ENCODE measurements at regions of chr2 and their contacts with region 1.

Region 1: GRCh38 chr2:207746131-207746530 is 23.6 kb downstream of the FZD5 start:
- DNase-seq: peak in 3 of 5 donors; percentile 26 to 57 (median 28)
- H3K4me3 ChIP-seq: no peak overlapping the region
- H3K4me3 Mint-ChIP-seq: no peak overlapping the region
- H3K27ac ChIP-seq: no peak overlapping the region
- H3K27ac Mint-ChIP-seq: no peak overlapping the region
- H3K4me1 ChIP-seq: no peaks in the 10 kb centered on the region
- H3K4me1 Mint-ChIP-seq: no peaks in the 10 kb centered on the region
- H3K27me3 ChIP-seq: no peaks in the 10 kb centered on the region
- H3K27me3 Mint-ChIP-seq: no peaks in the 10 kb centered on the region

Region 2: DNA sequence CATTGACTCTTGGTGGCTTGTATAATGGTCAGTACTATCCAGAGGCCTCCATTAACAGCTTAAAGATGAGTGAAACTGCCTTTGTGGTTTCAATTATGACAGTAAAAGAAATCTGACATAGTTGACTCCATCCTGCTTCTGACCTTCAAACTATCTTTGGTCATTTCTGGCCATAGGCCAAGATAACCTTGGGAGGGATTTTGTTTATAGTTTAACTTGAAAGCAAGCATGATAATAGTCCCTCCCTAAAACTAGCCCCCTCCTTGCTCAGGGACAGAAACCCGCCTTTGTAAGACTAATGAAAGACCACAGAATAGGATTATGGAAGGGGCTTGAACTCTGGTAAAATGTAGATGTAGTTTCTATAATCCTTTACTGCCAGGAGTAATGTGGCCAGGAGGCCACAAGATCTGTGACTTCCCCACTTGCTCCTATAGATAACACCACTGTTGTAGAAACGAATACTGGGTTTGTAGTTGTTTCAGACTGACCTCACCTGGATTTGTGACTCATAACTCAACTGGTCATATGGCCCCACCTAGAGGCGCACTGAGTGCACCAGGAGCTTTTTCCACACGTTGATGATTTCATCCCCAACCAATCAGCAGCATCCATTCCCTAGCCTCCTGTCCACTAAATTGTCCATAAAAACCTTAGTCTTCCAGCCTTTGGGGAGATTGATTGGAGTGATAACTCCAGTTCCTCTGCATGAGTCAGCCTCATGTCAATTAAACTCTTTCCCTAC is 287.8 kb after region 1 on chr2:
- CTCF ChIA-PET with region 1: interaction called, 10 read pairs
- POLR2A ChIA-PET with region 1: no interaction called
- DNase-seq: peak in 3 of 5 donors; percentile 8 to 64 (median 27)
- H3K4me3 ChIP-seq: no peak overlapping the region
- H3K4me3 Mint-ChIP-seq: no peak overlapping the region
- H3K27ac ChIP-seq: no peak overlapping the region
- H3K27ac Mint-ChIP-seq: no peak overlapping the region
- H3K4me1 ChIP-seq: no peaks in the 10 kb centered on the region
- H3K4me1 Mint-ChIP-seq: no peaks in the 10 kb centered on the region
- H3K27me3 ChIP-seq: no peaks in the 10 kb centered on the region
- H3K27me3 Mint-ChIP-seq: peaks cover 2 to 10% of the 10 kb centered on the region in 2 donors

Region 3: DNA sequence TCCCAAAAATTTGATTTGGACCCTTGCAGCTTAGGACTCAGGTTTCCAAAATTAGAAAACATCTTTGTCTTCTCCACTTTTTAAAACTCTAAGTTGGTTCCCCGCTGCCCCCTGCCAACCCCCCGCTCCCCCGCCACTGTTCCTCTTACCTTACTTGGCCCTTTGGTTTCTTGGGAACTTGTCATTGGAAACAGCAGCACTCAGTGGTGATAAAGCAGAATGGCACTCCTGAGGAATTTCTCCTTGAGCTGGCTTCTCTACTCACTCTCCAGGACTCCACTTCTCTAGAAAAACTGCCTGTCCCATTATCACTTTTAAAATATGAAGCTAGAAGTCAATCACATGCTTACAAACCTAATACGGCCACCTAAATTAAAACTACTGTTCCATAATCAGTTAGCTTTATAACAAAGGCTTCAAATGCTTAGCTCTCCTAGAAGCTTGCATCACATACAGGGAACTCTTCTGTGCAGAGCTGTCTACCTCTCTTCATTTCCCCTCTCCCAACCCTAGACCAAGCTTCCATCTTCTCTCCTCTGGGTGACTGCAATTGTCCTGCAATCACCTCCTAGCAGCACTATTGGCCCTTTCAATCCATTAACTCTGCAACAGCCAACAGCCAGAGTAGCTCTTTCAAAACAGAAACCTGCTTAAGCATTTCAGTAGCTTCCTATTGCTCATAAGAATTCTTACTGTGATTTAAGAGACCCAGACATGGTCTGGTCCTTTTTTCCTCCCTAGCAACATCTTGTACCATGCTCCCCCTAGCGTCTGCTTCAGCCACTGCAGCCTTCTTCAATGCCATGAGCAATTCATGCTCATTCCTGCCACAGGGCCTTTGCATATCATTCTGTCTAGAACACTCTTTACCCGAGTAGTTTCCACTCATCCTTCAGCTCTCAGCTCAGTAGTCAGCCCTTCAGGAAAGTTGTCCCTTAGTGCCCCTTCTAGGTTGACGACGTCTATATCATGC is 294.4 kb after region 1 on chr2:
- CTCF ChIA-PET with region 1: interaction called, 24 read pairs
- POLR2A ChIA-PET with region 1: no interaction called
- DNase-seq: peak; percentile 33 to 73 (median 40)
- H3K4me3 ChIP-seq: no peak overlapping the region
- H3K4me3 Mint-ChIP-seq: no peak overlapping the region
- H3K27ac ChIP-seq: no peak overlapping the region
- H3K27ac Mint-ChIP-seq: no peak overlapping the region
- H3K4me1 ChIP-seq: no peaks in the 10 kb centered on the region
- H3K4me1 Mint-ChIP-seq: no peaks in the 10 kb centered on the region
- H3K27me3 ChIP-seq: no peaks in the 10 kb centered on the region
- H3K27me3 Mint-ChIP-seq: peaks cover 6 to 12% of the 10 kb centered on the region in 2 donors

Region 4: DNA sequence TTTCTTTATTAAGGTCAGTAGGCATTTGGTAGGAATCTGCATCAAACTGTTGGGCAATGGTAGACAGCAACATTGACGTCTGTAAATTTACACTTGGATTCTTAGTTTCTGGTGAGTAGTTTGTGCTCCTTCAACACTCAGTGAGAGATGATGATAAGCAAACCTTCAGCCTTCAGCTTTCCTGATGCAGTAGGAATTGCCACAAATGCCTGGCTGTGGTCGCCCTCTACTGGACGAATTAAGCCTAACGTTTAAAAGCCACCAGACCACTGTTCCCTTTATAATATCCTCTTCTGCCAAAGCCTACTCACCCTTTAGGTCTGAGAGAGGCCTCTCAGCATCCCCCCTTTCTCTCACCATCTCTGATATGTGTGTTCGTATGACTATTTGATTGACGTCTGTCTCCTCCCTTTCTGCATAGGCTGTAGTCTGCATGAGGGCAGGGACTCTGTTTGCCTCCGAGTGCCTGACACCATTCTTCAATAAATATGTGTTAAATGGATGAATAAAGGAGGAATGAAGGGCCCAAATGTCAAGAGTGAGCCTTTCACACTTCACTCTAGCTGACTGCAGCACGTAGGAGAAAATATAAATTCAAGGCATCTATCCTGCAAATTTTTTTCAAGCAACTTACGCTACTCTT is 326.2 kb after region 1 on chr2:
- CTCF ChIA-PET with region 1: interaction called, 11 read pairs
- POLR2A ChIA-PET with region 1: no interaction called
- DNase-seq: peak; percentile 20 to 62 (median 32)
- H3K4me3 ChIP-seq: no peak overlapping the region
- H3K4me3 Mint-ChIP-seq: no peak overlapping the region
- H3K27ac ChIP-seq: no peak overlapping the region
- H3K27ac Mint-ChIP-seq: no peak overlapping the region
- H3K4me1 ChIP-seq: no peaks in the 10 kb centered on the region
- H3K4me1 Mint-ChIP-seq: no peaks in the 10 kb centered on the region
- H3K27me3 ChIP-seq: no peaks in the 10 kb centered on the region
- H3K27me3 Mint-ChIP-seq: peaks cover 0 to 23% of the 10 kb centered on the region in 2 donors

Measured in CD8-positive, alpha-beta memory T cell (primary cell).